Activated CD4-positive, alpha-beta T cell treated with anti-CD3 and anti-CD28 coated beads, Interleukin-2, amount 10 ng/mL, durations not matched to agents 24 days and 14 days (primary cell): ENCODE measurements at regions of chr19 and their contacts with region 1.

Region 1: GRCh38 chr19:47765523-47766358 is 12.8 kb upstream of the SELENOW start:
- DNase-seq: peak; percentile 79
- H3K4me3 Mint-ChIP-seq: no peak overlapping the region
- H3K27ac Mint-ChIP-seq: no peak overlapping the region
- H3K4me1 Mint-ChIP-seq: peaks cover 3% of the 10 kb centered on the region
- H3K27me3 Mint-ChIP-seq: no peaks in the 10 kb centered on the region

Region 2: GRCh38 chr19:47790398-47790814 is 24.7 kb after region 1 on chr19:
- intact Hi-C with region 1: loop called (anchors 1 kb)
- DNase-seq: peak; percentile 94
- H3K4me3 Mint-ChIP-seq: no peak overlapping the region
- H3K27ac Mint-ChIP-seq: no peak overlapping the region
- H3K4me1 Mint-ChIP-seq: peaks cover 6% of the 10 kb centered on the region
- H3K27me3 Mint-ChIP-seq: no peaks in the 10 kb centered on the region